PC-3 (cell line): ENCODE measurements at regions of chr18 and their contacts with region 1.

Region 1: DNA sequence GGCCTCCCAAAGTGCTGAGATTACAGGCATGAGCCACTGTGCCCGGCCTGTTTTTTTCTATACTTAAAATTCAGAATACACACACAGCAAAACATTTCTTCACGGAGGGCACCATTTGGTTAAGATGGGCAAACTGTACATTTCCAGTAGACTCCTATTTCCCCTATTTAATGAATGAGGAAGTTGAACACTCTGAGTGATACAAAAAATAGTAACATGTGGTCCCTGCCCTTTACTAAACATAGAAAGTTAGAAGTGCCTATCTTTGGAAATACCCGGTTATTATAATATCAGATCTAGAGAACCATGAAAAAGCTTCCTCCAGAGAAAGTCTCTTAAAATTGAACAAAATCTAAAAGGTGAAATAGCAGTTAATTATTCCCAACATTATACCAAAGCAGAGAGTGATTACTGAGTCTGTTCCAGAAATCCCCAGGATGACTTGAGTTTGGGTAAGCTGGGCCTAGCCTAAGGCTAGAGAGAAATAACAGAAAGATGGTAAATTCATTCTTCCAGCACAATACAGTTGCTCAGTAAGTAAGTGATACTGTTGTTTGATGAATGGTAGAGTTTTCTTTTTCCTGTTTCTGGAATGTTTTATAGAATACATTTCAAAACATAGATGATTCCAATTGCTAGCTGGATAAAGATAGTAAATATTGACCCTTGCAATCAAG is 23.3 kb upstream of the RMC1 start:
- DNase-seq: no peak
- ATAC-seq: no peak
- H3K4me3 ChIP-seq: no peak overlapping the region
- H3K27ac ChIP-seq: no peak overlapping the region
- H3K4me1 ChIP-seq: no peaks in the 10 kb centered on the region
- H3K27me3 ChIP-seq: no peaks in the 10 kb centered on the region
- CTCF ChIP-seq: no peak

Region 2: GRCh38 chr18:22952525-22952924 is 527.4 kb before region 1 on chr18:
- CTCF ChIA-PET with region 1: no interaction called
- POLR2A ChIA-PET with region 1: interaction called, 14 read pairs
- intact Hi-C with region 1: no loop called
- DNase-seq: no peak
- ATAC-seq: no peak
- H3K4me3 ChIP-seq: no peak overlapping the region
- H3K27ac ChIP-seq: no peak overlapping the region
- H3K4me1 ChIP-seq: no peaks in the 10 kb centered on the region
- H3K27me3 ChIP-seq: no peaks in the 10 kb centered on the region
- CTCF ChIP-seq: no peak

Region 3: GRCh38 chr18:23307567-23308295 is 172.2 kb before region 1 on chr18:
- CTCF ChIA-PET with region 1: no interaction called
- POLR2A ChIA-PET with region 1: no interaction called
- intact Hi-C with region 1: no loop called
- DNase-seq: peak; percentile 32
- ATAC-seq: peak; percentile 16; the same call in 1 of the 2 replicates
- H3K4me3 ChIP-seq: no peak overlapping the region
- H3K27ac ChIP-seq: no peak overlapping the region
- H3K4me1 ChIP-seq: peaks cover 28% of the 10 kb centered on the region
- H3K27me3 ChIP-seq: no peaks in the 10 kb centered on the region
- CTCF ChIP-seq: no peak

Region 4: GRCh38 chr18:23422672-23423418 is 57.1 kb before region 1 on chr18:
- CTCF ChIA-PET with region 1: no interaction called
- POLR2A ChIA-PET with region 1: no interaction called
- intact Hi-C with region 1: no loop called
- DNase-seq: peak; percentile 91
- ATAC-seq: peak; percentile 87
- H3K4me3 ChIP-seq: no peak overlapping the region
- H3K27ac ChIP-seq: peak overlapping the region; percentile 36
- H3K4me1 ChIP-seq: peaks cover 15% of the 10 kb centered on the region
- H3K27me3 ChIP-seq: no peaks in the 10 kb centered on the region
- CTCF ChIP-seq: no peak

Region 5: DNA sequence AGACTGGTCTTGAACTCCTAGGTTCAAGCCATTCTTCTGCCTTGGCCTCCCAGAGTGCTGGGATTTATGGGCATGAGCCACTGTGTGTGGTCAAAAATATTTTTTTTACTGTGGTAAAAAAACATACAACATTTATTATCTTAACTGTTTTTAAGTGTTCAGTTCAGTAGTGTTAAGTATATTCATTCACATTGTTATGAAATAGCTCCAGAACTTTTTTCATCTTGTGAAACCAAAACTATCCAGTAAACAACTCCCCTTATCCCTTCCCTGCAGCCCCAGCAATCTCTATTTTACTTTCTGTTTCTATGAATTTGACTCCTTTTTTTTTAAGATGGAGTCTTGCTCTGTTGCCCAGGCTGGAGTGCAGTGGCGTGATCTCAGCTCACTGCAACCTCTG is 32.7 kb after region 1 on chr18:
- CTCF ChIA-PET with region 1: no interaction called
- POLR2A ChIA-PET with region 1: interaction called, 22 read pairs
- intact Hi-C with region 1: no loop called
- DNase-seq: no peak
- ATAC-seq: no peak
- H3K4me3 ChIP-seq: no peak overlapping the region
- H3K27ac ChIP-seq: no peak overlapping the region
- H3K4me1 ChIP-seq: no peaks in the 10 kb centered on the region
- H3K27me3 ChIP-seq: no peaks in the 10 kb centered on the region
- CTCF ChIP-seq: no peak